ENCODE measurements at regions of chr10 and their contacts with region 1.

Region 1: DNA sequence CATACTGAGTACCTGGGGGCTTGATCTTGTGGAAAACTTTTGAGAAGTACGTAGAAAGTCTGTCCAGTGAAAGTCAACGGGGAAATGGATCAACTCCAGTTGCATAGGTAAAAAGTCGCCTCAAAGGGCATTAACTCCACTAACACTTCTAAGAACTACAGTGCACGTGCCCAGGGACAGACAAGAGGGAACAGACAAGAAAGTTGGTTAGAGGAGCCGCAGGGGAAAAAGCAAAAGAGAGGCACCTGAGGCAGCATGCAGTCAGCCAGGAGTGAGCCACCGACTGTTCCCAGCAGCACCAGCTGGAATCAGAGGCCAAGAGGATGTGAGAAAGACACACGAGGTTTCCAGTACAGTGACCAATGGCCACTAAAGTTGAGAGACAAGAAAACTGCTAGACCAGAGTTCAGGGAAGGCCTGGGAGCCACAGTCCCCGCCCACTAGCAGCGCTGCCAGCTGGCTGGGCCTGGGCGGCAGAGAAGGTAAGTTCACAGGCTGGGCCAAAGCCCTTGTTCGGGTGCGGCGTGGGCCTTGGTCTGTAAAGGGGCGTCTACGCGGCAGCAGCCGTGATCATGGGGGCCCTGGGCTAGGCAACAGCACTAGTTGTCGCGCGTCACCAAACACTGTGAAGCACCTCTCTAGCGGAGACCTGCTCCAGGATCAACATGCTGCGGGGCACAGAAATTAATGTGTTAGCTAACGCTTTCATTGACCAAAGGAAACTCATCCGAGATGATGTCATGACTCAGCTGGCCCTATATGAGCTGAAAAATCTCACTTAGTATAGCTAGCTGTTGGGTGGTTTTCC is 14.0 kb downstream of the ITGB1 start:
- DNase-seq: peak in 1 of 5 donors; percentile 76
- H3K4me3 ChIP-seq: no peak overlapping the region
- H3K27ac ChIP-seq: no peak overlapping the region
- H3K4me1 ChIP-seq: peaks cover 3 to 37% (median 19%) of the 10 kb centered on the region in 3 donors
- H3K27me3 ChIP-seq: no peaks in the 10 kb centered on the region
- CTCF ChIP-seq: no peak

Region 2: DNA sequence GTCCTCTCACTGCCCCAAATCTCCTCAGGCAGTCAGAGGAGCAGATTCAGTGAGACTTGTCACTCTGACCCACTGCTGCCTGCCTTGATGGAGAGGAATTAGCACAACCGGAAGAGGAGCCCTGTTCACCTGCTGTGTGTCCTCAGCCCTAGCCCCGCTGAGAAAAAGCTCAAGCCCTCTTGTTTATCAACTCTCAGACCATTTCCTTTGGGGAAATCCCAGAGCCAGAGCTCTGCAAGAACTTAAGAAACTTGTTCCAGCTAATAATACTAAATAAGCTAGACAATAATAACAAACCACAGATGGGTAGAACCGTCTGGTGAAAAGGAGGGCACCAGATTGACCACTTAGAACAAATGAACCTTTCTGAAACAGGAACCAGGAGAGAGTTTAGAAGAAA is 51.7 kb after region 1 on chr10:
- intact Hi-C with region 1: loop called (anchors 10 kb)
- DNase-seq: no peak
- H3K4me3 ChIP-seq: no peak overlapping the region
- H3K27ac ChIP-seq: no peak overlapping the region
- H3K4me1 ChIP-seq: no peaks in the 10 kb centered on the region
- H3K27me3 ChIP-seq: no peaks in the 10 kb centered on the region
- CTCF ChIP-seq: no peak

Region 3: DNA sequence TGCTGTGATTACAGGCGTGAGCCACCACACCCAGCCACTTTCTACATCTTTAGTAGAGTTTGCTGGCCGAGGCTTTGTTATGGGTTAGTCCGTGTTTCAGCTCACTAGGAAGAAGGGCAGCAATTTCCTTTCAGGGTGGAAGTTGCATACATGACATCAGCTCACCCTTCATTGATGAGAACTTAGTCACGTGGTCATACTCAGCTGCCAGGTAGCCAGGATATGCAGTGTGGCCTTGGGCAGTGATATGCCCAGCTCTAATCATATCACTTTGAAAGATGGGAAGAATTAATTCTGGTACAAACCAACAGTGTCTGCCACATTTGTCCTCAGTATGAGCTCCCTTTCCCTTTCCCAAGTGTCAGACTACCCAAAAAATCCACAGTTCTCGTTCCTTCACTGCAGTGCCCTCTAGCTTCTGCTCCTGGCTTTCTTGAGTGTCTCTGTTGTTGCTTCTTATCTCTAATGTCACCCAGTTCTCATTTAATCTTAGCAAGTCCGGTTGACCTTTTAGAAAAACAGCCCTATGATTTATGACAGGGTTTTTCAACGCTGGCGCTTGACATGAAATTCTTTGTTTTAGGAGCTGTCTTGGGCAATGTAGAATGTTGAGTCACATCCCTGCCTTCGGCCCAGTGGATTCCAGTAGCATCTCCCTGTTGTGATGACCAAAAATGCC is 122.6 kb after region 1 on chr10:
- intact Hi-C with region 1: no loop called
- DNase-seq: no peak
- H3K4me3 ChIP-seq: no peak overlapping the region
- H3K27ac ChIP-seq: no peak overlapping the region
- H3K4me1 ChIP-seq: no peaks in the 10 kb centered on the region
- H3K27me3 ChIP-seq: no peaks in the 10 kb centered on the region
- CTCF ChIP-seq: no peak

Region 4: DNA sequence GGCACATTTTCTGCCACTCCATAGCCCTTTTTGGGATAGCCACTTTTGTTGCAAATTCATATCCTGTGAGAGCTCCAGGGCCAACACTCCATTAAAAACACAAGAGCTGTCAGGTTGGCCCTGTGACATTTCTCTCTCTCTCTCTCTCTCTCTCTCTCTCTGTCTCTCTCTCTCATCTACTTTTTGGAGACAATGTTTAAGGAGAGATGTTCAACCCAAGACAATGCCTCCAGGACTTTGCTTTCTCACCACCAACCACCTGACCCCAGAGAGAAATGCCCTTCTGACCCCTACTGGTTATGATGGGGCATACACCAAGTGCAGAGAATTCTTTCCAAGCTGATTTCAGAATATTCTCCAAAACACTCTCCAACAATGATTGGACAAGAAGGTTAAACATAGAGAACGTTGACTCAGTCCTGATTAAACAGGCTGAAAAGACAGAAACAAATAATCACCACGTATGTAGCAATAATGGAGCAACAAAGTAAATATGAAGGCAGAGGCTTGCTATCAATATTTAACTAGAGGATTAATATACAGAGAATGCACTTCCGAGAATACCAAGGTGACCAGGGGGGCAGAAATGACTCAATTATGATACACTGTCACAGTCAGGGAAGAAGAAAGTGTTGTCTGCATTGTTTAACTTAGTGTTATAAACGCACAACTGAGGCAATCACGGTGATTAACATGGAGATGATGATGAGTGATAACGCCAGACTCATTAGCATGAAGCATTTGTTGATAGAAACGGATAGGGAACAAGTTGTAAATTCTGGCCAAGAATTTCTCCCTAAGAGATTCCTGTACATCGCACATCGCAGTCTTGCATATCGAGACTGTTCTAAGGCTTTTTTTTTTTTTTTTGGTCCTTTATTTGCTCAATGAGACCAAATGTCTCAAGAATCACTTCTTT is 211.9 kb after region 1 on chr10:
- intact Hi-C with region 1: no loop called
- DNase-seq: no peak
- H3K4me3 ChIP-seq: no peak overlapping the region
- H3K27ac ChIP-seq: no peak overlapping the region
- H3K4me1 ChIP-seq: peaks cover 0 to 5% (median 0%) of the 10 kb centered on the region in 3 donors
- H3K27me3 ChIP-seq: no peaks in the 10 kb centered on the region
- CTCF ChIP-seq: peak; percentile 38